GM10248 (cell line): ENCODE measurements at regions of chr6 and their contacts with region 1.

Region 1: DNA sequence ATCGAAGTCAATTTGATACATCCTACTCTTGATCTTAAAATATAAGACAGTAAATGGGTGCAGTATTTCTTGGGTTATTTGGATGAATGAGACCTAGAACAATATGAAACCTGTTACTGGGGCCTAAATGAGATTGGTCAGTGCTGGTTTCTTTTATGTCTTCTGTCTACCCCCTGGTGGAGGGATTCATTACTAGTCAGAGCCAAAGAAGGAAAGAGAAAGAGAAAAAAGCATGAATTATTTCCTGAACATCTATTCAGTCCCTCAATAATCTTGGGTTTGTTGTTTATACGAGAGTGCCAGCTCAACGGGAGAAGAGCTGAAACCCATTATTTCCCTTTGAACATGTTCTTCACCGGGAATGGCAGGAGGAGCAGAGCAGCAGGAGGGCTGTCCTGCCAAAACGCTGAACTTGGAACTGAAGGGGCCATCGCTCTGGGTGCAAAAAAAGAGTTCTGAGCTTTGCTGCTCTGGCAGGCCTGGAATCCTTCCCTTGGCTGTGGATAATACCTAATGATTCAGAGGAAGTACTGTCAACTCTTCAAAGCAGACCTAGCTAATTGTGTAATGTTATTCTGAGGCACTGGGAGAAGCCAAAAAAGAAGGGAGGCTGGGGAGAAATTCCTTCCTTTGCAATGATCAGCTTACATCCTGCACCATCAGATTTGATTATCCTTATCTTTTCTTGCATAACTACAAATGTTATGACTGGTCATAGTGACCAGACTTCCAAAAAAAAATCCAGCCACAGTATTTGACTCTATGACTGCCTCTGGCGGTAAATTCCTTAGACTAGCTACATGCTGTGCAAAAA is 72.0 kb downstream of the BLOC1S5 start:
- DNase-seq: peak; percentile 66
- CTCF ChIP-seq: peak; percentile 46

Region 2: GRCh38 chr6:7725849-7726415 is 266.3 kb before region 1 on chr6 and contains the start of gene BMP6:
- CTCF ChIA-PET with region 1: interaction called, 29 read pairs
- POLR2A ChIA-PET with region 1: no interaction called
- DNase-seq: peak; percentile 87
- CTCF ChIP-seq: no peak

Region 3: DNA sequence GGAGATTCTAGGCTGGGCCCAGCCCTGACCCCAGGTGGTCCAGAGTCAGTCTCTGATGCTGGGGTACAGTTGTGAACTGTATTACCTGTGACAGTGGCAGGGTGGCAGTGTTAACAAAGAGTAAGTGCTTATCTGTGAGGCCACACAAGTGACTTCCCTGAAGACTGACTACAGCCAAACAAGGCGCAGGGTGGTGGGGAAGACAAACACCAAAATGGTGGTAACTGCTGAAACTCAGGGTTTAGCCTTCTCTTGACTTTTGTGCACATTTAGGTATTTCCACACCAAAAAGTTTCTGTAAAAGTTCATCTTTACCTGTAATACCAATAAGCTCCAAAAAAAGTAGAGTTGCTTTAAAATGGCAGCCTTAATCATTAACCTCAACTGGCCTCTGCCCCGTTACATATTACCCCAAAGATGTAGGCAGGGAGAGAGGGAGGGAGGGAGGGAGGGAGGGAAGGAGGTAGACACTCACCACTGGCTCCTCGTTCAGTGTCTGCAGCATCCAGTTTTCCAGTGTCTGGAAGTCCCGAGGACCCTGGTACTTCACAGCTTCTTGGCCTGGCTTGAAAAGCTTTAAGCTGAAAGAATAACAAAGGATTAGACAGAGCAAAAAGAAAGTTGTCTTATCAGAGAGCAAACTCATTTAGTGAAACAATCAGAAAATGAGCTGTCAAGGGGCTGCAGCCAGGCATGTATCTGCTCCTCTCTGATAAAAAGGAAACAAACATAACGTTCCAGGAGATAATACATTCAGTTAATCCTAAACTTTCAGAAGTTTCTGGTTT is 92.9 kb before region 1 on chr6:
- CTCF ChIA-PET with region 1: interaction called, 19 read pairs
- POLR2A ChIA-PET with region 1: no interaction called
- DNase-seq: peak; percentile 51
- CTCF ChIP-seq: no peak

Region 4: DNA sequence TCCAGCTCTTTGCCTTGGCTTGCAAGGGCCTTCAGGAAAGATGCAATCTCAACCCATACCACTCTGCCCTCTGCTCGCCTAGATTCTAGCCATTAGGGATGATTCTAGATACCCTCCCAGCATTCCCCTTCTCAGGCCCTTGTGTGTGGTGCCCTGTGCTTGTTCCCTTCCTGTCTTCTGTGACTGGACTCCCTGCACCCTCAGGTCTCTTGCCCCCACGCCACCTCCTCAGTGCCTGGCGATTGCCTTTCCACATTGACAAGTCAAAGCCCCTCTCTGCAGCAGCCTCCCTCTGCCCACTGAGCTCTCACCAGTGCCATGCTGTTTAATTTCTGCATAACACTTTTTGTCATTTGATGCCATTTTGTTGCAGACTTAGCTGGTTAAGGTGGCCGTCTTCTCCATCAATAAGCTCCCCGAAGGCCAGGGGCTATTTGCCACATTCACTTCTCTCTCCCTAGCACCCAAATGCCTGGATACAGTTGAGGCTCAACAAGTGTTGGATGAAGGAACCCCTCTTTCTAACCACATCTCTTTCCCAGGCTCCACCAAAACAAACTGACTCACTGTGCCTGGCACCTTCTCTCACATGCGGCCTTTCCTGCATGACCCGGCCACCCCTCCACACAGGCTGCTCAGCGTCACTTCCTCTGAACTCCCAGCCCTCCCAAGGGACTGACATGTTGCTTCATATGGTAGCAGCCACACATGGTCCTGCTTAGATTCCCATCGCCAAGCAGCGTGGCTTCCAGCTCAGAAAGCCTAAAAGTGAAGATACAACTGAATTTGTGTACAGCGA is 77.0 kb before region 1 on chr6:
- CTCF ChIA-PET with region 1: interaction called, 12 read pairs
- POLR2A ChIA-PET with region 1: no interaction called
- DNase-seq: no peak
- CTCF ChIP-seq: no peak

Region 5: DNA sequence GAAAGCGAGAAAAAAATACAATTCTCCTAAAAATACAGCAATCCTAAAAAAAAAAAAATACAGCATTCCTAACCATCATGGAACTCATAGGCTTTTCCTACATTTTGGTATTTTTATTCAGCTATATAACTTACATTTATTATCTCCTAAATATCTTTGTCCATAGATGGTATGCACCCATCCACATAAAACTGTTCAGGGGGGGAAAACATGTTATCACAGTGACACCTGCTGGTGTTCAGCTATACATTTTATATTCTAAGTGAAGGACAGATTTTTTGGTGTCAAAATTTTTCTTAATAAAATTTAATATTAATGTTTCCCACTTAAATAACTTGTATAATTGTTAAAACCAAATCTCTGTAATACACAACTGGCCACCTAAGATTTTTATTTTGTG is 14.0 kb after region 1 on chr6:
- CTCF ChIA-PET with region 1: interaction called, 12 read pairs
- POLR2A ChIA-PET with region 1: no interaction called
- DNase-seq: peak; percentile 43
- CTCF ChIP-seq: peak; percentile 30

Region 6: DNA sequence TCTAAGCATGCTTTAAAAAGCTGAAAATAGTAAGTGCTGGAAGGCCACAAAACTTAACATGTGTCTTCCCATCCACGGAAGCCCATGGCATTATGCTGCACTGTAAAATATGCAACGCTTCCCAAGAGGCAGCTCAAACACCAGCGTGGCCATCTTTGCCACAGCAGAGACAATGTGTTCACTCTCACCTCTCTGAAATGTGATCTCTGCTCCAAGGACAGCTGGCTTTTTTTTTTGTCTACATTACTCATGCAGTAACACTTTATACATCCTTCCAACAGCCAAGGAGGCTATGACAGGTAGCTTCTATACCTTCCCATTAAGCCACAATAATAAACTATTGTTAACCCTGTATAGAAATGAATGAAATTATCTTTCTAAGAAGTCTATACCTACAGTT is 22.7 kb after region 1 on chr6:
- CTCF ChIA-PET with region 1: interaction called, 12 read pairs
- POLR2A ChIA-PET with region 1: no interaction called
- DNase-seq: no peak
- CTCF ChIP-seq: no peak